Aorta (tissue), 5 donors: ENCODE measurements at regions of chr18 and their contacts with region 1.

Region 1: GRCh38 chr18:56575819-56576663 is 62.4 kb downstream of the TXNL1 start:
- DNase-seq: no peak
- ATAC-seq: peak; percentile 89
- H3K4me3 ChIP-seq: peak overlapping the region in 1 of 2 donors; percentile 18
- H3K27ac ChIP-seq: no peak overlapping the region
- H3K4me1 ChIP-seq: peaks cover 2 to 4% of the 10 kb centered on the region in 2 donors
- H3K27me3 ChIP-seq: no peaks in the 10 kb centered on the region

Region 2: DNA sequence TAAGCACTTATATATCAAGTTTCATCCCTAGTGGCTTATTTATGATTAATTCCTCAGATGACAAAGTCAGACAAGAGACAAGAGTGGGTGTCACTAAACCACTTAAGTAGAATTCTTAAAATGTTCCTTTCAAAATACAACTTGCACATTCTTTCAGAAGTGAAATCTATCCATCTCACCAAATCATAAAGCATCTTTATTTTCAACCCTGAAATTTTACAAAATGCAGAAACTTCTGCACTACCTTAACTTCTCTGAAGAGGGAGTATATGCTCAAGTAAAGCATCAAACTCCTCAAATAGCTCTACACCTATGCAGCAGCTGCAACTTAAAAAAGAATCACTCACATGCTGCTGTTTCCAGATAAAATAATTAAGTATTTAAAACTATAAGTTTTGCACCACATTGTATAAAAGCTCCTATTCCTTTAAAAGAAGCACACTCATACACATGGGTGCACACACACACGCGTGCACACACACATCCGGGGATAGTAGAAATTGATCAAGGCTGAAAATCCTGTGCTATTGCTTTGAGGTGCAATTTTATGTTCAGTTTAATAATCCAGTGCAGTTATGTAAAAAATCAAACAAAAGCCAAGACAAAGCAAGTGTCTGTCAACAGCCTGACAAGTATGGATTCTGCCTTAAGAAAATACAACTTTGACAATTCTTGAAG is 1232.5 kb before region 1 on chr18:
- intact Hi-C with region 1: loop called in 1 of 2 experiments (anchors 5 kb)
- DNase-seq: no peak
- ATAC-seq: no peak
- H3K4me3 ChIP-seq: no peak overlapping the region
- H3K27ac ChIP-seq: no peak overlapping the region
- H3K4me1 ChIP-seq: no peaks in the 10 kb centered on the region
- H3K27me3 ChIP-seq: no peaks in the 10 kb centered on the region

Region 3: DNA sequence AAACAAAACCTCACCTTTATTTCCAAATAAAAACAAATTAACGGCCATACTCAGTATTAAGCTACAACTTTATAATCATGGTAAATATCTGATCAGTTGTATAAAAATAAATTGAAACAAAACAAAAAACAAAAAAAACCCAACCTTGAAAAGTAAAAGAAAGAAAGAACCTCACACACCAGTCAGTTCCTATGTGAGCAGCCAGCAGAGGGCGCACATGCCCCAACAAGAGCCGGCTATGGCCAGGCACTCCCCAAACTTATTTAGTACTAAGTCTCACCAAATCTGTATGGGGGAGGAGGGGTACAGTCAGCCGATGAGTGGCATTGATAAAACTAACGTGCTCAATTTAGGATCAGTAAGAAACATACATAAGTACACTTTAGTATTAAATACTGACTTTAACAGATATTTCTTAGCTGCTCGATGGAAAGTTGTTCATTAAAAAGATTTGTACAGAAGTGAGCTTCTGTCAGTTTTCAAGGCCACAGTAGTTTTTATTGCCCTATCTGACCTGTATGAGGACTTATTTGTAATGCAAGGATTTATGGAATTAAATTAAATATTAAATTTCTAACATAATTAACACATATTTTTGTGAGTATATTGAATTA is 1160.7 kb before region 1 on chr18:
- intact Hi-C with region 1: loop called (anchors 5 to 10 kb)
- DNase-seq: peak; percentile 90 to 97
- ATAC-seq: peak; percentile 91
- H3K4me3 ChIP-seq: no peak overlapping the region
- H3K27ac ChIP-seq: no peak overlapping the region
- H3K4me1 ChIP-seq: no peaks in the 10 kb centered on the region
- H3K27me3 ChIP-seq: no peaks in the 10 kb centered on the region

Region 4: DNA sequence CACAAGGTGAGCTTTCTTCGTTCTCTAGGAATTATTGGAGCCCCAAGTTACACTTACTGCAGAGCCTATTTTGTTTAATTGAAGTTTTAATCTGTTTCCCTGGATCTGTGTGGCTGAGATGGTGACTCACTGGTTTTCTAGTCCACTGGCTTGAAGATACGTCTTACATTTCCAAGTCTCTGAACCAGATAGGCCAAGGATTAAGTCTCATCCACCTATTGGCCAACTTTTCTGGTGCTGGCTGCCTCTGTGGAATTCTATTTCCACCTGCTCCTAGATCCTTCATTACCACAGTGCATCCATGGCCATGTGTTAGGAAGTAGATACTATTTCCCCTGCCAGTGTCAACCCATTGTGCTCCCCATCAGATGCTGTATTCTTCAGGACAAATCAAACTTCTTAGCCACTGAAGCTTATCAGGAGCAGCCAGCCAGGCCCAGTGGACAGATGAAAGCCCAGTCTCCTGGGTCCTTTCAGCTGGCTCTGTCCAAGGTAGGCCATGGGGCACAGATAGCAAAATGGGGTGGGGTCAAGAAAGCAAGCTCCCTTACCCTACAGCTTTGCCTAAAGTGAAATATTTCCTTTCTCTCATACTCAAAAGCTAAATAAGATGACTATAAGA is 789.3 kb before region 1 on chr18:
- intact Hi-C with region 1: loop called in 1 of 2 experiments (anchors 5 kb)
- DNase-seq: no peak
- ATAC-seq: no peak
- H3K4me3 ChIP-seq: no peak overlapping the region
- H3K27ac ChIP-seq: no peak overlapping the region
- H3K4me1 ChIP-seq: no peaks in the 10 kb centered on the region
- H3K27me3 ChIP-seq: no peaks in the 10 kb centered on the region